PC-3 (cell line): ENCODE measurements at regions of chr2 and their contacts with region 1.

Region 1: GRCh38 chr2:235106874-235107639 is 155.2 kb downstream of the SH3BP4 start:
- DNase-seq: peak; percentile 81
- ATAC-seq: peak; percentile 93
- H3K4me3 ChIP-seq: no peak overlapping the region
- H3K27ac ChIP-seq: no peak overlapping the region
- H3K4me1 ChIP-seq: no peaks in the 10 kb centered on the region
- H3K27me3 ChIP-seq: no peaks in the 10 kb centered on the region
- CTCF ChIP-seq: peak; percentile 87

Region 2: DNA sequence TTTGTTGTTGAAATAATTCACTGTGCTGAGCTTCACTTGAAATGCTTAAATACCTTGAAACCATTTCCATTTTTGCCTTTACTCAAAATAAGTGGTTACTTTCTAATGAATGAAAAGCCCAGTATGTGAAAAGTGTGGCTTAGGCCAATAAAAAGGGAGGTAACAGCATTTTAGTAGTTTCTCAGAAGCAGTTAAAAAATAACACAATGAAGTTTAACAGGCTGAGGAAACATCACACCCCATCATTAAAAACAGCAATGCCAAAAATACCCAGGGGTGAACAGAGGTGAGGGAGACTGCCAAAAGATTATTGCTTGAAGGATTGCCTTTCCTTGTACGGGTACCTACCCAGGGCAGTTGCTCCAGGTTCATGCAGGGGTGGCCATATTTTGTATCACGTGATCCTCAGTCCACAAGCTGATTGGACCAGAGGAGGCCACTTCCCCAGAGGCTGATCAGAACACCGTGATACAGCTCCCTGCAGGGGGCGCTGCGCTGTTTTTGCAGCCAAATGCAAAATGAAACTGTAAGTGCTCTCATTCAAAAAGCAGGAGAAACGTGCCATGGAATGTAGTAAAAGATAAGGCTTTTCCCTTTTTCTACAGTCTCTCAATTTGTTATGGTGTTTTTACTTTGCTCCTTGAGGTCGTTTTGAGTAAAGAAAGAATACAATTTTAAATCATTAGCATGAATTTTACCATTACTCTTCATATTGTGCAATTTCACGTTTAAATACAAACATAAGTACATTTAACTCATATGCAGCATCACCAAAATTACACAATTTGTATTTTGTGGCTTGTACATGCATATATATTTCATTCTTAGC is 225.4 kb before region 1 on chr2:
- CTCF ChIA-PET with region 1: interaction called, 5 read pairs
- POLR2A ChIA-PET with region 1: no interaction called
- intact Hi-C with region 1: loop called (anchors 1 kb)
- DNase-seq: peak; percentile 93
- ATAC-seq: peak; percentile 94
- H3K4me3 ChIP-seq: peak overlapping the region; percentile 62
- H3K27ac ChIP-seq: peak overlapping the region; percentile 67
- H3K4me1 ChIP-seq: peaks cover 33% of the 10 kb centered on the region
- H3K27me3 ChIP-seq: no peaks in the 10 kb centered on the region
- CTCF ChIP-seq: peak; percentile 94

Region 3: DNA sequence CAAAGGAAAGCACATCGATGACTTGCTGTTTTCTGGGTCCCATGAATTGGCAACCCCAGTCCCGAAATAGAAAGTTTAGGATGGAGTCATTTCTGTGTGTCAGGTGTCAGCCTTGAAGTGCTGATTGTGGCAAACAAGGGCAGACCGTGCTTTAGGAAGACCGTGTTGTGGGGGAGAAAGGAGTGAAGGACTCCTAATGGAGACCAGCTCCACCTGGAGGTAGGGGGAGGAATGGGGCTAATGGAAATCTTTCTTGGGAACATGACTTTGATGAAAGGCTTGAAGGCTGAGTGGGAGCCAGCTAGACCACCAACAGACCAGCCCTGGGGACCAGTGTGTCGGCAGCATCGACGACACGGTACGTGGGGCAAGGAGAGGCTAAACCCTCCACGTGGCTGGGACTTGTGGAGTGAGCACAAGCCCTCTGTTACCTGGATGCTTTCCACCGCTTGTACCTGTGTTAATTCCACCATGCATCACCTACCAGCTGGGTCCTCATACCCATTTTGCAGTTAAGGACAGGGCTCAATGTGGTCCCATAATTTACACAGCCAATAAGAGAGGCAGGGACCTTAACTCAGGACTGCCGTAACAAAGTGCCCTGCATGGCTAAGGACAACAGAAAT is 51.1 kb before region 1 on chr2:
- CTCF ChIA-PET with region 1: no interaction called
- POLR2A ChIA-PET with region 1: no interaction called
- intact Hi-C with region 1: loop called (anchors 1 kb)
- DNase-seq: peak; percentile 62
- ATAC-seq: no peak; the same call in 1 of the 2 replicates
- H3K4me3 ChIP-seq: no peak overlapping the region
- H3K27ac ChIP-seq: no peak overlapping the region
- H3K4me1 ChIP-seq: no peaks in the 10 kb centered on the region; the same call in 1 of the 2 replicates
- H3K27me3 ChIP-seq: no peaks in the 10 kb centered on the region
- CTCF ChIP-seq: peak; percentile 75

Region 4: GRCh38 chr2:235191978-235192377 is 84.9 kb after region 1 on chr2:
- CTCF ChIA-PET with region 1: no interaction called
- POLR2A ChIA-PET with region 1: no interaction called
- intact Hi-C with region 1: no loop called
- DNase-seq: no peak
- ATAC-seq: no peak
- H3K4me3 ChIP-seq: no peak overlapping the region
- H3K27ac ChIP-seq: no peak overlapping the region
- H3K4me1 ChIP-seq: no peaks in the 10 kb centered on the region
- H3K27me3 ChIP-seq: no peaks in the 10 kb centered on the region
- CTCF ChIP-seq: no peak

Region 5: DNA sequence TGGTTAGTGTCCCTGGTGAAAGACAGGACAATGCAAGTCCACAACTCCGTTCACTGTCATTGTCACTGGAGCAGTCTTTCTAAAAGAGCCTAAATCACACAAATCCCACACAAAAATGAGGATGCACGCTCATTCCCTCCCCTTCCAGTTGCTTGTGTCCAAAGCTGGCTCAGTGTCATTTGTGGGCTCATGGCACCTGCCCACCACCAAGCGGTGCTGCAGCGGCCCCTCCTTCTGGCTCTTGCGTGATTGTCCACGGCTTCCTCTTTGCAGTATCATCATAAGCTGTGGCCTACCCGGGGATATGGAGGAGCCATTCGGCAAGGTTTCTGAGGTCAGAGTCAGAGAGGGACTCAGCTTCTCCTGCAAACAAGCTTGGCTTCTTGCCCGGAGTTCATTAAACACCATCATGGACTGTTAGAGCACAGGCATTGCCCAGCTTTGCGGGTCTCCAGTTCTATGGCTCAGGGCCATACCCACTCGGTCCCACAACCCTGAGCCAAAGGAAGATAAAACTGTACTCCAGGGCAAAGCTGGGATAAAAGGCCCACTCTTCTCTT is 207.4 kb after region 1 on chr2:
- CTCF ChIA-PET with region 1: no interaction called
- POLR2A ChIA-PET with region 1: no interaction called
- intact Hi-C with region 1: no loop called
- DNase-seq: no peak
- ATAC-seq: no peak
- H3K4me3 ChIP-seq: no peak overlapping the region
- H3K27ac ChIP-seq: no peak overlapping the region
- H3K4me1 ChIP-seq: peaks cover 7% of the 10 kb centered on the region
- H3K27me3 ChIP-seq: no peaks in the 10 kb centered on the region
- CTCF ChIP-seq: no peak